Gastrocnemius medialis (tissue), 4 donors: ENCODE measurements at regions of chr1 and their contacts with region 1.

Region 1: DNA sequence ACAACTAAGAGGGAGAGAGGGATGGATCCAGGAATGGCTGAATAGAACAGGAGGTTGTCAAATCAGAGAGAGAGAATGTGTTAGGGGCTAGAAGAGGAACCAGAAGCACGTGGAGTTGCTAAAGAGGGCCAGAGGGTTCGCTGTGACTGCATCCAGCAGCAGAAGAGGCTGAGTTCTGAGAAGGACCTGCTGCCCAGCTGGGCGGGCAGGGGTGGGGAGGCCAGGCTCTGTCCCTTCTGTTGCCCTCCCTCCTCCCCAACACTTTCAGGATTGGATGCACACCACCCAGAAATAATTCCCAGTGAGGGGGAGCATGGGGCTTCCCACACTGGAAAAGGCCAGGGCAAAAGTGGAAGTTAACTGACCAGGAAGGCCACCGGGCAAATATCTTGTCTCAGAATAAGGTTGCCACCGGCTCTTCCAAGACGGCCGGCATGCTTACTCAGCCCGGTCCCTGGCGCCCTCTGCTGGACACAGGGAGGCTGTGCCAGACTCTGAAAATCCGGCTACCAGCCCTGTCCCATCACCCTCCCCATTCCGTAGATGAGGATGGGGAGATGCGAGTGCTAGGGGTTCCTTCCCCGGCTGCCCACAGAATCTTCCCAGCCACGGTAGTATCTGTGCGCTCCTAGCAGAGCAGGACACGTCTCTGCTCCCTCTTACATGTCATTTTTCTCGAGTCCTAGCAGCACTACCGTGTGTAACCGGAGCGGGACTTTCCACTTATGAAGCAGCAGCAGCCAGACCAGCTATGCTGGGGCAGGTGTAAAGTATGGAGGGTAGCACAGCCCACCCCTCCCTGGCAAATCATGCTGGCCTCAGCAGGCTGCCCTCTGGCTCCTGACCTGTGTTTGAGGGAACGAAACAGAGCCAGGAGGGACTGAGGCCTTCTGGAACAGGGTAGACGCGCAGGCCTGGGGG is 46.8 kb upstream of the A3GALT2 start:
- DNase-seq: peak; percentile 81 to 85
- ATAC-seq: peak; percentile 55 to 65
- H3K4me3 ChIP-seq: no peak overlapping the region
- H3K27ac ChIP-seq: peak overlapping the region; percentile 86 to 98 (median 96)
- H3K4me1 ChIP-seq: peaks cover 45 to 50% of the 10 kb centered on the region in 2 donors
- H3K27me3 ChIP-seq: no peaks in the 10 kb centered on the region
- CTCF ChIP-seq: peak; percentile 97 to 99 (median 99)
- POLR2A ChIP-seq: peak in 1 of 2 donors; percentile 24

Region 2: DNA sequence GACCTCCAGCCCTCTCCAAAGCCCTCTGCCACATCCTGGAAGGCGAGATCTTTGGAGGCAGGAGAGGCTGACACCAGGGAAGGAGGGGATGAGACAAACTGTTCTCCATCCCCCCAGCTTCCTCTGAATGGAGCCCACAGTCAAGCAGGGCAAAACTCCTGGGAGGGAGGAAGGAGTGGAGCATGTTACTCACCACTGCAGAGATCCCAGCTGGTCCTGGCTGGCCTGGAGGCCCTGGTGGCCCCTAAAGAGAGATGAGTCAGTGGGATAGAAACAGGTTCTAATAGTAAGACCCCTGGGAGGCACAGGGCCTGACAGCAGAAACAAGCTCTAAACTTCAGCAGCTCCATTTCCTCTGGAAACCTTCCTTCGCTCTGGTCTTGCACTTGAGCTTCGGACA is 1709.0 kb before region 1 on chr1:
- in situ Hi-C with region 1: no loop called
- intact Hi-C with region 1: no loop called
- DNase-seq: no peak
- ATAC-seq: no peak
- H3K4me3 ChIP-seq: no peak overlapping the region
- H3K27ac ChIP-seq: no peak overlapping the region
- H3K4me1 ChIP-seq: no peaks in the 10 kb centered on the region
- H3K27me3 ChIP-seq: no peaks in the 10 kb centered on the region
- CTCF ChIP-seq: no peak
- POLR2A ChIP-seq: no peak

Region 3: GRCh38 chr1:33127001-33127791 is 240.5 kb before region 1 on chr1:
- in situ Hi-C with region 1: no loop called
- intact Hi-C with region 1: loop called (anchors 10 kb)
- DNase-seq: peak; percentile 97 to 99
- ATAC-seq: peak; percentile 96 to 98
- H3K4me3 ChIP-seq: peak overlapping the region; percentile 68 to 86 (median 76)
- H3K27ac ChIP-seq: peak overlapping the region; percentile 85 to 91 (median 86)
- H3K4me1 ChIP-seq: peaks cover 8 to 26% of the 10 kb centered on the region in 2 donors
- H3K27me3 ChIP-seq: no peaks in the 10 kb centered on the region
- CTCF ChIP-seq: peak; percentile 71 to 93 (median 91)
- POLR2A ChIP-seq: peak; percentile 29 to 39

Region 4: DNA sequence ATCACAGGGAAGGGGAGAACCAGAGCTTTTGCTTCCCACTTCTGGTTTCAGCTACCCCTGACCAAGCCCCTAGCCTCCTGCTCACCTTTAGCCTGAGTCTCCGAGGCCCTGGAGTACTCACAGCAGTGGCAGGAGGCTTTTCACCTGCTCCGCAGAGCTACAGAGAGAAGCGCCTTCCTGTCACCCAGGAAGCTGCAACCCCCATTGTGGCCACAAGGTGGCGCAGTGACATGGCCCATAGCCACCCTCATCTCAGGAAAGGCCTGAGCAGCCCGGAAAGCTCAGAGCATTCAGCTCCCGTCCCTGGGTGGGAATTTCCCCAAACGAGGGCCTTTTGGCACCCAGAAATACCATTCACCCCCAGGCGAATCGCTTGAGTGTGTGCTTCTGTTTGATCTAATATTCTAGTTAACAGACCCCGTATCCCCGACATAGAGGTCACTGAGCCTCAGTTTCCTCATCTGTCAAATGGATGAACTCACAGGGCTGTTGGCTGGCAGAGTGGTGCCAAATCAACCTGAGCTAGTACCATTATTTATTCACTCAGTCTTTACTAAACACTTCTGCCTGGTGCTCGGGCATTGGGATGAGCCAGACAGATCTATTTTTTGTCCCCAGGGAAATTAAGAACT is 72.2 kb before region 1 on chr1:
- in situ Hi-C with region 1: loop called (anchors 5 kb)
- intact Hi-C with region 1: loop called (anchors 1 kb)
- DNase-seq: peak; percentile 63 to 84
- ATAC-seq: peak; percentile 83 to 92
- H3K4me3 ChIP-seq: no peak overlapping the region
- H3K27ac ChIP-seq: peak overlapping the region; percentile 8 to 41 (median 20)
- H3K4me1 ChIP-seq: peaks cover 4 to 14% of the 10 kb centered on the region in 2 donors
- H3K27me3 ChIP-seq: no peaks in the 10 kb centered on the region
- CTCF ChIP-seq: peak; percentile 94 to 99 (median 98)
- POLR2A ChIP-seq: no peak

Region 5: DNA sequence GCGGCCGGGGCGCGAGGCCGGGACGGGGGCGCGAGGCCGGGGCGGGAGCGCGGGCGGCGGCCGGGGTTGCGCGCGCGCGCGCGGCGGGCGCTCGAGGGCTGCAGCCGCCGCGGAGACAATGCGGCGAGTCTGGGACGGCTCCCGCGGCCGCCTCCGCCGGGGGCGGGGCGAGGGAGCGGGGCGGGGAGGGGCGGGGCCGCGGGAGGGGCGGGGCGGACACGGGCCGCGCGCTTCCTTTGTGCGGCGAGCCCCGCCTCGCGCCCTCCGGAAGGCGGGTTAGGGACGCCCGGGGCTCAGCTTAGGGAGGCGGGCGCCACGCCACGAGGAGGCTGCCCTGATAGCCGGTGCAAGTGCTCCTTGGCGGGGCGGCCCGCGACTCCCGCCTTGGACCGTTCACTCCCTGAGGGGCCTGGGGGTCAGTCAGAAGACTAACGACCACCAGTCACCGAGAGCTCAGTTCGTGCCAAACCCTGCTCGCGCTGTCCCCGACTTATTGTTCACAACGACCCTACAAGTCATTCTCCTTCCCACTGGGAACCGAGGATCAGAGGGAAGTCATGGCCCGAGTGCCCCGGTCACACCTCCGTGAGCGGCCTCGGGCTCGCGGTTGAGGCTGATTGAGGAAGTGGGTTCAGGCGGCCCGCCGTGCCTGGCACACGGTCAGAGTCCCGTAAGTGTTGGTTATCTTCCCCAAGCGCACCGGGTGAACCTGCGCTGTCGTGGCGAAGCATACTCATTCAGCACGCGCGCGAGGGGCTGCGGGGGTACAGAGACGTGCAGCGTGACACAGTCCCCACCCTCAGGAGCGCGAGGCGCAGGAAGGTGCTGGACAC is 17.8 kb before region 1 on chr1:
- in situ Hi-C with region 1: no loop called
- intact Hi-C with region 1: loop called (anchors 1 kb)
- DNase-seq: peak; percentile 80 to 86
- ATAC-seq: peak; percentile 67 to 73
- H3K4me3 ChIP-seq: peak overlapping the region; percentile 66 to 83 (median 68)
- H3K27ac ChIP-seq: peak overlapping the region; percentile 90 to 99 (median 94)
- H3K4me1 ChIP-seq: peaks cover 22 to 28% of the 10 kb centered on the region in 2 donors
- H3K27me3 ChIP-seq: no peaks in the 10 kb centered on the region
- CTCF ChIP-seq: peak in 1 of 5 experiments; percentile 8
- POLR2A ChIP-seq: peak; percentile 91 to 94

Region 6: DNA sequence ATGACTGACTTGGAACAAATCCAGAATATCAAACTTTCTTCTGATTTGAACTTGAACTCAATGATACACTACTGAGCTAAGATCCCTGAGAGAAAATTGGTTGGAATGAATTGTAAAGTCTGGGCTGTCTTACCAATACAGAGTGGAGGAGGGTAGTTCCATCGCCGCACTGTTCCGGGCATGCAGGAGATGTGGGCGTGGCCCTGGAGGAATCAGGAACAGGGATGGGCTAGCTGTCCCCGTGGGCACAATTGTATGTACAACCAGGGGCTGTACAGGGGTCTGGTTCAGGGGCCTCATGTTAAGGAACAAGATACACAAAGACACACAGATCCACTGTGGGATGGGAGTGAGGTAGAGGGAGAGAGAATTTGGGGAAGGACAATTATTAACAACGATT is 249.0 kb after region 1 on chr1:
- in situ Hi-C with region 1: no loop called
- intact Hi-C with region 1: loop called (anchors 2 kb)
- DNase-seq: no peak
- ATAC-seq: no peak
- H3K4me3 ChIP-seq: no peak overlapping the region
- H3K27ac ChIP-seq: no peak overlapping the region
- H3K4me1 ChIP-seq: no peaks in the 10 kb centered on the region
- H3K27me3 ChIP-seq: peaks cover 0 to 6% (median 0%) of the 10 kb centered on the region in 3 donors
- CTCF ChIP-seq: no peak
- POLR2A ChIP-seq: no peak